ENCODE measurements at regions of chr6 and their contacts with region 1.

Region 1: GRCh38 chr6:5398530-5398929 is 137.2 kb downstream of the FARS2 start:
- DNase-seq: peak in 1 of 2 experiments; percentile 59
- H3K4me3 ChIP-seq: no peak overlapping the region
- H3K4me1 ChIP-seq: peaks cover 3% of the 10 kb centered on the region; the same call in 1 of the 2 replicates
- H3K27me3 ChIP-seq: no peaks in the 10 kb centered on the region

Region 2: GRCh38 chr6:4351520-4352315 is 1046.8 kb before region 1 on chr6:
- in situ Hi-C with region 1: no loop called
- DNase-seq: no peak
- H3K4me3 ChIP-seq: no peak overlapping the region
- H3K4me1 ChIP-seq: no peaks in the 10 kb centered on the region
- H3K27me3 ChIP-seq: peaks cover 12% of the 10 kb centered on the region

Region 3: GRCh38 chr6:5053038-5053437 is 345.5 kb before region 1 on chr6:
- in situ Hi-C with region 1: loop called (anchors 10 kb)
- DNase-seq: no peak
- H3K4me3 ChIP-seq: no peak overlapping the region
- H3K4me1 ChIP-seq: peaks cover 6% of the 10 kb centered on the region; the same call in 1 of the 2 replicates
- H3K27me3 ChIP-seq: no peaks in the 10 kb centered on the region

Region 4: GRCh38 chr6:5143634-5144311 is 254.8 kb before region 1 on chr6:
- in situ Hi-C with region 1: loop called (anchors 5 kb)
- DNase-seq: peak; percentile 78 to 90
- H3K4me3 ChIP-seq: no peak overlapping the region
- H3K4me1 ChIP-seq: peaks cover 5% of the 10 kb centered on the region
- H3K27me3 ChIP-seq: no peaks in the 10 kb centered on the region

Region 5: DNA sequence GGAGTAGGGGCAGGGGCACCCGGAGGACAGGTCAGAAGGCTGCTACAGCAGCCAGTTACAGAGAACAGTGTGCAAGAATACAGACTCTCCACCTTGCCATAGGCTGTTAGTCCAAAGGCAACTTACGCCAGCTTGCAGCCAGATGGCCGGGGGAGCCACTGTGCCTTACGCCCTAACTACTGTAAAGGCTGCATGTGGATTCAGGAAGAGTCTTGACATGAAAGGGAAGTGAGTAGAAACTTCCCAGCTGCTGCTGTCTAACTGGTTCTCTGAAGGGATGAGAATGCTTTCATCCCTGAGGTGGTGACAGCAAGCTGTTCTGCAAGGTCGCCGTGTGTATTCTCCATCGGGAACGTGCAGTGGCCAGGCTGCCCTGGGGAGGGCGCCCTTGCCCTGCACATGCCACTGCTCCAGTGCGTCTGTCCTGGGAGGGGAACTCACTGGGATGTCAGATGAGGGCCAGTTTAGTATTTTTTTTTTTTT is 183.9 kb before region 1 on chr6:
- in situ Hi-C with region 1: loop called (anchors 10 kb)
- DNase-seq: peak; percentile 53 to 78
- H3K4me3 ChIP-seq: no peak overlapping the region
- H3K4me1 ChIP-seq: peaks cover 44% of the 10 kb centered on the region
- H3K27me3 ChIP-seq: no peaks in the 10 kb centered on the region

Region 6: GRCh38 chr6:5486214-5486613 is 87.7 kb after region 1 on chr6:
- in situ Hi-C with region 1: no loop called
- DNase-seq: no peak
- H3K4me3 ChIP-seq: no peak overlapping the region
- H3K4me1 ChIP-seq: no peaks in the 10 kb centered on the region
- H3K27me3 ChIP-seq: no peaks in the 10 kb centered on the region

Measured in HAP-1 (cell line).